ENCODE measurements at regions of chr19 and their contacts with region 1.

Region 1: DNA sequence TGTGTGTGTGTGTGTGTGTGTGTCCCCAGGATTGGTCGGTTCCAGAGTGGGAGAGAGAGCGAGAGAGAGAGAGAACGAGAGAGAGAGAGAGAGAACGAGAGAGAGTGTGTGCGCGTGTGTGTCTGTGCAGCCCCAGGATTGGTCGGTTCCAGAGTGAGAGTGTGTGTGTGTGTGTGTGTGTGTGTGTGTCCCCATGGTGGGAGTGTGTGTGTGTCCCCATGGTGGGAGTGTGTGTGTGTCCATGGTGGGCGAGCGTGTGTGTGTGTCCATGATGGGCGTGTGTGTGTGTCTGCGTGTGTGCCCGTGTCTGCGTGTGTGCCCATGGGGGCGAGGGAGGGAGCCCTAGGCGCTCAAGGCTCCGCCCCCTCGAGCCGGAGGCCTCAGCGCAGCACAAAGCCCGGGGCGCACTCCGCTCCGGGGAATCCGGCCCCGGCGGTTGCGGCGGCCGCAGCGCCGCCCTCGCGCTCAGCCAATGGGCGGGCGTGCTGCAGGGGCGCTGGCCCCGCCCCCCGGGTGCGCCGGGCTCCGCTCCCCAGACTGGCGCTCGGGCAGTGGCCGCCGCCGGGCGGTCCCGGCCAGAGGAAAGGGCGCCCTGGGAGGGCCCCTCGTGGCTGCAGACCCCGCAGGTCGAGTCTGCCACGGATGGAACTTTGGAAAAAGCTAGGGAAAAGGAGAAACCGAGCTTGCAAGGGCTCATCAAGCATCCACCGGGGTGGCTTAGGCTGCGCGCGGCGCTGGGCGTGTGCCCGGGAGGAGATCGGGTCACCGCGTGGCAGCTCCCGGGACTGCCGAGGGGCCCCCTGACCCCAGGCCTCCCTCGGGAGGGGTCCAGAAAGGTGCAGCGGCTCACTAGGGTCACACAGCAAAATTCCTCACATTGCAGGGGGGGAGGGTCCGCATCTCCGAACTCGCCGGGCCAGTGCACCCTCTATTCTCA is 96.2 kb downstream of the INSR start:
- DNase-seq: peak; percentile 95
- ATAC-seq: peak; percentile 84
- H3K4me3 Mint-ChIP-seq: peak overlapping the region; percentile 77
- H3K27ac Mint-ChIP-seq: peak overlapping the region; percentile 88
- H3K4me1 Mint-ChIP-seq: peaks cover 16% of the 10 kb centered on the region
- H3K27me3 Mint-ChIP-seq: peaks cover 21% of the 10 kb centered on the region

Region 2: DNA sequence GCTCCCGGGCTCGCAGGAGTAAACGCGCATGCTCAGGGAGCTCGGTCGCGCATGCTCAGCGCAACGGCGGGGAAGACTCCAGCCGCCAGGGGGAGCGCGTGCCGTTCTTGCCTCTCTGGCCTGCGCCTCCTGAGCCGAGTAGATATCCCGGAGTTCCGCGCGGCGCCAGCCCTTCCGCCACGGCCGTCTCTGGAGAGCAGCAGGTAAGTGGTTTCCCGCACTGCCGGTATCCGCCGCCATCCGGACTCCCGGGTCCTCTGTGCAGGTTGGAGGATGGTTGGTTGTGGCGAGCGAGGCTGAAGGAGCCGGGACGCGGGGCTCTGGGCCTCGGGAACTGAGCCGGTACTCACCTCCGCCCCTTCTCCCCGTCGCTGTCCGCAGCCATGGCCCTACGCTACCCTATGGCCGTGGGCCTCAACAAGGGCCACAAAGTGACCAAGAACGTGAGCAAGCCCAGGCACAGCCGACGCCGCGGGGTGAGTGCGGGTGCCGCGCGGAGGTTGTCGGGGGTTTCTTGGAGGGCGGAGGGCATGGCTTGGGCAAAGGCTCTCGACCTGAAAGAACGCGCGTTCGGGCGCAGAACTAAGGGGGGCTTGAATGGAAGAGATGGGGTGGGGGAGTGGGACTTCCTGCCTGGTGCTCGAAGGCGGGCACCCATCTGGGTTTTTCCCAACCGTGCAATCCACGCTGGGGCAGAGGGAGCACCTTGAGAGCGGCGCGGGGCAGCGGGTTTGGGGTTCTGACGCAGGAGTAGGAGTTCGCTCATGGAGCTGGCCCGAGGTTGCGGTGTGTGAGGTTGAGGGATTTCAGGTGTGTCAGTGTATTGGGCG is 1507.7 kb before region 1 on chr19 and contains the start of gene RPL36:
- CTCF ChIA-PET with region 1: no interaction called
- POLR2A ChIA-PET with region 1: no interaction called
- intact Hi-C with region 1: loop called in 1 of 2 experiments (anchors 5 kb)
- DNase-seq: peak; percentile 100
- ATAC-seq: peak; percentile 54
- H3K4me3 Mint-ChIP-seq: peak within 1 kb of the TSS; percentile 100
- H3K27ac Mint-ChIP-seq: peak within 1 kb of the TSS; percentile 96
- H3K4me1 Mint-ChIP-seq: peaks cover 21% of the 10 kb centered on the region
- H3K27me3 Mint-ChIP-seq: no peaks in the 10 kb centered on the region
- total RNA-seq, gene RPL36: 1,452 to 1,530 TPM

Region 3: DNA sequence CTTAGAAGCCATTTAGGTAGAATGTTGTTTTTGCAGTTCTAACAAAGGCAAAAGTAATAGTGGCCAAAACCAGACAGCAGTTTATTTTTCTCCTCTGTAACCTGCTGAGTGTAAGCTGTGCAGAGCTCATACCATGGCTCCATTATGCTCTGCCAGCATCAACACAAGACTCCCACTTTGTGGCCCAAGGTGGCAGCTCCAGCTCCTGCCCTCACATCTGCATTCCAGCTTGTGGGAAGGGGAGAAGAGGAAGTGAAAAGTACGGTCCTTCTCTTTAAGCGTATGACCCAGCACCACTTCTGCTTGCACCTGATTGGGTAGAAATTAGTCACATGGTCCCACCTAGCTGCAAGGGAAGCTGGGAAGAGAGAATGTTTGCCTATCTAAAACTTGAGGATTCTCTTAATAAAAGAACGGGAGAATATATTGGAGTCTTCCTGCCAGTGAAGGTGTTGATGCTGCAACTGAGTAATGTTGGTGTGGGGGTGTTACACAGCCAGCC is 291.4 kb before region 1 on chr19:
- CTCF ChIA-PET with region 1: no interaction called
- POLR2A ChIA-PET with region 1: no interaction called
- intact Hi-C with region 1: no loop called
- DNase-seq: no peak
- ATAC-seq: no peak
- H3K4me3 Mint-ChIP-seq: no peak overlapping the region
- H3K27ac Mint-ChIP-seq: no peak overlapping the region
- H3K4me1 Mint-ChIP-seq: no peaks in the 10 kb centered on the region
- H3K27me3 Mint-ChIP-seq: no peaks in the 10 kb centered on the region

Region 4: DNA sequence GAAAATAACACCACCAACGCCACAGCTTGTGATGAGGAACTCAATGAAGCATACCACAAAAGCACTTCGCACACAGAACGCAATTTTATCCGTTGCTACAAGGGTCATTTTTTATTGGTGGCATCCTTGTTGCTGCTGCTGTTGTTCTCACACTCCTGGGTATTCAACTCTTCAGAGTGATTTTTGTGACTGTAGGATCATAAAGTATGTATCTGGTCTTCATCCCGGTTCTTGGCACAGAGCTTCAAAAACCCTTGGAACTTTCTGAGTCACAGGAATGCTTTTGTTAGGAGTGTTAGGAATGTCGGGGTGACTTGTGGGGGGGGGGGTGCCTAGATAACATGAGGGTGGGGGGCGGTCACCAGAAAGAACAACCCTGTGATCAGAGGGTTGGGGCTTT is 20.1 kb before region 1 on chr19:
- CTCF ChIA-PET with region 1: no interaction called
- POLR2A ChIA-PET with region 1: no interaction called
- intact Hi-C with region 1: loop called (anchors 1 to 2 kb)
- DNase-seq: no peak
- ATAC-seq: no peak
- H3K4me3 Mint-ChIP-seq: no peak overlapping the region
- H3K27ac Mint-ChIP-seq: no peak overlapping the region
- H3K4me1 Mint-ChIP-seq: peaks cover 18% of the 10 kb centered on the region
- H3K27me3 Mint-ChIP-seq: peaks cover 12% of the 10 kb centered on the region

Region 5: GRCh38 chr19:7293795-7294570 is 96.0 kb after region 1 on chr19 and contains the start of gene INSR:
- CTCF ChIA-PET with region 1: no interaction called
- POLR2A ChIA-PET with region 1: no interaction called
- intact Hi-C with region 1: loop called (anchors 1 kb)
- DNase-seq: peak; percentile 85
- ATAC-seq: peak; percentile 92
- H3K4me3 Mint-ChIP-seq: peak within 1 kb of the TSS; percentile 72
- H3K27ac Mint-ChIP-seq: no peak within 1 kb of the TSS
- H3K4me1 Mint-ChIP-seq: peaks cover 8% of the 10 kb centered on the region
- H3K27me3 Mint-ChIP-seq: peaks cover 27% of the 10 kb centered on the region
- total RNA-seq, gene INSR: 3.5 to 4.2 TPM

Region 6: GRCh38 chr19:7348587-7349230 is 150.7 kb after region 1 on chr19 and contains the start of gene ARHGEF18:
- CTCF ChIA-PET with region 1: no interaction called
- POLR2A ChIA-PET with region 1: no interaction called
- intact Hi-C with region 1: loop called (anchors 5 kb)
- DNase-seq: peak; percentile 75
- ATAC-seq: peak; percentile 71
- H3K4me3 Mint-ChIP-seq: peak within 1 kb of the TSS; percentile 84
- H3K27ac Mint-ChIP-seq: peak within 1 kb of the TSS; percentile 90
- H3K4me1 Mint-ChIP-seq: peaks cover 60% of the 10 kb centered on the region
- H3K27me3 Mint-ChIP-seq: no peaks in the 10 kb centered on the region
- total RNA-seq, gene ARHGEF18: 36.6 to 39.3 TPM

Measured in activated CD4-positive, alpha-beta T cell treated with anti-CD3 and anti-CD28 coated beads for 36 hours (primary cell).